ENCODE measurements at regions of chr17 and their contacts with region 1.

Region 1: DNA sequence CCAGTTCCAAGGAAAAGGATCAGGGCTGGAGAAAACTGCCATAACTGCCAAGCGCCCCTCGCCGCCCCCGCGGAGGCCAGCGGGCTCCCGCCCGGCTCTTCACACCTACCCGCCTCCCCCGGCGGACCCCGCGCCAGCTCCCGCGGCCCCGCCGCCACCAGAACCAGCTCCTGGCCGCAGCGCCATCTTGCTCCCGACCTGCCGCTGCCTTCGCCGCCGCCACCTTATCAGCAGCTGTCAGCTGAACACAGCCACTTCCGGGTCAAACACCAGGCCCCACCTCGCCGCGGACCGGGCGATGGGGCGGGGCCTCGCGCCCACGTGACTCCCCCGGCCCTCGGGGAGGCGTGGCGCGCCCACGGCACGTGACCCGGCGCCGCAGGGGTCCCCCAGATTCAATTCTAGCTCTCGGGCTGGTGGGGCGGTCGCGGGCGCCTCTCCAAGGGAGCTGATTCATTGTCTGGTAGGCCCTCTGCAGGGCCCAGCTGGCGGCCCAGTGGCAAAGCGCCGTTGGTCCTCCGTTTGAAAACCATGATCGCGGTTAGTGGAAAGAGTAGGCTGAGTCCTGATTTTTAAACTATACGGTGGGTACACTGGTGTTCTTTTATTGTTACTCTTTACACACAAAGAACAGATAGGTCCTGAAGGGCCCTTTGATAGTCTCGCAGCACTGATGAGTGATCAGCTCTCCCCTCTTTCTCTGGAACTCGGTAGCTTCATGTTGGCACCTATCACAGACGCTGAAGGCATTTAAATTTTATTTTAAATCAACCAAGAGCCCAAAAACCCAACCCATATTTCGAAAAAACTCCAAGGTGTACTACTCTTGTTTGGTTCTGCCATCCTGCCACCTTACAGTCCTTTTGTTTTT is at the start of gene SYNRG:
- DNase-seq: peak; percentile 100
- CTCF ChIP-seq: peak; percentile 31

Region 2: GRCh38 chr17:36812762-36813161 is 796.6 kb before region 1 on chr17:
- CTCF ChIA-PET with region 1: no interaction called
- POLR2A ChIA-PET with region 1: no interaction called
- DNase-seq: no peak
- CTCF ChIP-seq: no peak

Region 3: DNA sequence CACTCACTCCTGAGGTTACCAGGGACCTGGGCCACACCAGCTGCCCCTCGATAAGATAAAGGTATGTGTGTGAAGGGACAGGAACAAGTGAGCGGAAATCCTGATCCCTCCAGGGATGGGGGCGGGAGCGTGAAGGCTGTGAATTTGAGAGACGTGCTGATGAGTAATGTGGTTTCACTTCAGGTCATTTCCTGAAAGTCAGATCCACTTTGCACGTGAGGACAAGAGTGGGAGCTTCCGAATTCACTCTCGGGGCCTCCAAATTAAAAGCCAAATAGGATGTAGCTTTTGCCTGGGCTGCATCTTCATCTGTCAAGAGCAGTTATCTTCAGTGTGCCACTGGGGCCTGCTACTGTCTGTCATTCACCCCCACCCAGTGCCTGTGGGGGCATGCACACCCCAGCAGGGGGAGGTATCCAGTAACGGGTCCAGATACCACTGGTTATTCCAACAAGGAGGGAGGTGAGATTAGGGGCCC is 759.5 kb before region 1 on chr17:
- CTCF ChIA-PET with region 1: no interaction called
- POLR2A ChIA-PET with region 1: no interaction called
- DNase-seq: peak; percentile 58
- CTCF ChIP-seq: no peak

Region 4: GRCh38 chr17:37598145-37598544 is 11.3 kb before region 1 on chr17:
- CTCF ChIA-PET with region 1: interaction called, 14 read pairs
- POLR2A ChIA-PET with region 1: interaction called, 4 read pairs
- DNase-seq: no peak
- CTCF ChIP-seq: no peak